CD4-positive, alpha-beta memory T cell (primary cell): ENCODE measurements at regions of chr13 and their contacts with region 1.

Region 1: DNA sequence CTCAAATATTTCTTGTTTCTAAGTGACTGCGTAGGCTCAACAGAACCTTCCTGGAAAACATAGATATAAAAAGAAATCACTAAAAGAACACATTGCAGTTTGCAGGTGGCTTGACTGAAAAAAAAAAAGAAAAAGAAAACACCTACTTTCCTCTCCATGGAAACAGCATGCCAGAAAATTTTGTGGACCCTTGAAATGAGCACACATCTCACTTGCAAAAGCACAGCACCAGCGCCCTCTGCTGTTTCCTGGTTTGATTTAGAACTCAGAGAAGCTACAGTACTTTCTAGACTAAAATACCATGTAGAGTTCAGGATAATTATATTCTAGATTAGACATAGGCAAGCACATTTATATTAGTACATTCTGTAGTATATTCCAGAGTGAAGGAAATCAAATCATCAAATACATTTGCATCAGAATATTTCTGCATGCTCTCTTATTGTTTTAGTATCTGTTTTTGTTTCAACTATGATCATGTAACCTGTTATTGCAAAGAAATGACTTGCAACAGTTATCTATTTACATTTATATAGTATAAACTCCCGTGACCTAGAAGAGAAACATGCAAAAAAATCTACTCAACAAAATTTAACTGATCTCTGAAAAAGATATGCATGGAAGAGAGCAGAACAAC is 22.3 kb upstream of the XPO4 start:
- DNase-seq: peak; percentile 55 to 71 (median 63)
- H3K4me3 ChIP-seq: no peak overlapping the region
- H3K4me3 Mint-ChIP-seq: no peak overlapping the region
- H3K27ac ChIP-seq: no peak overlapping the region
- H3K27ac Mint-ChIP-seq: no peak overlapping the region
- H3K4me1 ChIP-seq: no peaks in the 10 kb centered on the region
- H3K4me1 Mint-ChIP-seq: no peaks in the 10 kb centered on the region
- H3K27me3 ChIP-seq: no peaks in the 10 kb centered on the region
- H3K27me3 Mint-ChIP-seq: no peaks in the 10 kb centered on the region

Region 2: DNA sequence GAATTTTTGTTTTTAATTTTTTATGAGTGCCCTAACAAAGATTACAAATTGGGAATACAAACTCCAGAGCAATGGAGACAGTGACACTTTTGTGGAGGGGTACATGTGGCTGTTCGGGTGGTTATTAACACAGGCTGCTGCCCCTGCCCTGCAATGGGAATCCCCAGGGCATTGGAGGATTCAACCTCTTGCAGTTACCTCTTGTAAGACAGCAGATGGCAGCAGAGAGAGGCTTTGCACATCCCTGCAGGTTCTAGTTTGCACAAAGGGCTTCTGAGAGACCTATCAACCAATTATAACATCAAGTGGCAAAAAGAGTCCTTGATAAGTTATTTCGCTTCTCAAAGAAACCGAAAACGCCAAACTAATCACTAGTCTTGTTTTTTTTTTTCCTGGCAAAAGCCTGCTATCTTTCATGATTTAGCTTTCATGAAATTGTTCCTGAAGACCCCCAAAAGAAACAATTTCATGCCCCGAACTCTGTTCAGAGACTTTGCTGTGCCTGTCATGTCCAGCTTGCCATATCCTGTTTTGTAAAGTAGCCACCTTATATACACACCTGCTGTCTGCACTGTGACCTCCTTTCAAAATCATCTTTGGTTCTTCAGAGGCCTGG is 742.5 kb before region 1 on chr13:
- CTCF ChIA-PET with region 1: interaction called, 3 read pairs
- POLR2A ChIA-PET with region 1: no interaction called
- intact Hi-C with region 1: loop called (anchors 1 kb)
- DNase-seq: peak in 4 of 5 donors; percentile 63 to 73 (median 68)
- H3K4me3 ChIP-seq: no peak overlapping the region
- H3K4me3 Mint-ChIP-seq: no peak overlapping the region
- H3K27ac ChIP-seq: no peak overlapping the region
- H3K27ac Mint-ChIP-seq: no peak overlapping the region
- H3K4me1 ChIP-seq: no peaks in the 10 kb centered on the region
- H3K4me1 Mint-ChIP-seq: peaks cover 0 to 2% (median 0%) of the 10 kb centered on the region in 4 donors
- H3K27me3 ChIP-seq: peaks cover 7% of the 10 kb centered on the region
- H3K27me3 Mint-ChIP-seq: peaks cover 25 to 34% of the 10 kb centered on the region in 2 donors

Region 3: GRCh38 chr13:20197361-20197834 is 727.5 kb before region 1 on chr13:
- CTCF ChIA-PET with region 1: interaction called, 6 read pairs
- POLR2A ChIA-PET with region 1: no interaction called
- intact Hi-C with region 1: loop called (anchors 1 kb)
- DNase-seq: peak in 4 of 5 donors; percentile 42 to 52 (median 49)
- H3K4me3 ChIP-seq: no peak overlapping the region
- H3K4me3 Mint-ChIP-seq: no peak overlapping the region
- H3K27ac ChIP-seq: no peak overlapping the region
- H3K27ac Mint-ChIP-seq: peak overlapping the region in 1 of 7 donors; percentile 2
- H3K4me1 ChIP-seq: peaks cover 22% of the 10 kb centered on the region
- H3K4me1 Mint-ChIP-seq: peaks cover 14 to 21% (median 16%) of the 10 kb centered on the region in 4 donors
- H3K27me3 ChIP-seq: peaks cover 41% of the 10 kb centered on the region
- H3K27me3 Mint-ChIP-seq: peaks cover 34 to 36% of the 10 kb centered on the region in 2 donors

Region 4: GRCh38 chr13:20495082-20496023 is 429.5 kb before region 1 on chr13:
- CTCF ChIA-PET with region 1: interaction called, 104 read pairs
- POLR2A ChIA-PET with region 1: no interaction called
- intact Hi-C with region 1: loop called (anchors 1 kb)
- DNase-seq: peak; percentile 62 to 70 (median 68)
- H3K4me3 ChIP-seq: no peak overlapping the region
- H3K4me3 Mint-ChIP-seq: no peak overlapping the region
- H3K27ac ChIP-seq: no peak overlapping the region
- H3K27ac Mint-ChIP-seq: peak overlapping the region in 1 of 7 donors; percentile 32
- H3K4me1 ChIP-seq: peaks cover 6% of the 10 kb centered on the region
- H3K4me1 Mint-ChIP-seq: peaks cover 0 to 7% (median 2%) of the 10 kb centered on the region in 4 donors
- H3K27me3 ChIP-seq: no peaks in the 10 kb centered on the region
- H3K27me3 Mint-ChIP-seq: no peaks in the 10 kb centered on the region

Region 5: DNA sequence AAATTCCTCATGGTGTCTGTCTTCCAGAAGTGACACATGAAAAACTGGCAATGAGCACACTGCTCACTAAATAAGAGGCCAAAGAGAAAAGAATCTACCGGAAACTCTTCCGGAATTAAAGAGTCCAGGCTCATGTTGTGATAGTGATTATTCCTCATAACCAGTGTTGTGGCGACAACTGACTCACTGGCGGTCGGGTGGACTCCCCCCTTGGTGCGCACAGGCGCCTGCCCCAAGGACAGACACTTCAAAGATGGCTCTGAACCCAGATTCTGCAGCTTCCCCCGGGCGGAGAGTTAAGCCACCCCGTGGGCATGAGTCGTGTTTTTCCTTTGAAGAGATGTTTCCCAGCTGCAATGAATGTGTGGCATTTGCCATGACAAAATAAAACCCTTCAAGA is 211.1 kb before region 1 on chr13:
- CTCF ChIA-PET with region 1: interaction called, 90 read pairs
- POLR2A ChIA-PET with region 1: no interaction called
- intact Hi-C with region 1: no loop called
- DNase-seq: no peak
- H3K4me3 ChIP-seq: no peak overlapping the region
- H3K4me3 Mint-ChIP-seq: no peak overlapping the region
- H3K27ac ChIP-seq: no peak overlapping the region
- H3K27ac Mint-ChIP-seq: no peak overlapping the region
- H3K4me1 ChIP-seq: peaks cover 6% of the 10 kb centered on the region
- H3K4me1 Mint-ChIP-seq: peaks cover 4 to 10% (median 7%) of the 10 kb centered on the region in 4 donors
- H3K27me3 ChIP-seq: no peaks in the 10 kb centered on the region
- H3K27me3 Mint-ChIP-seq: peaks cover 3 to 12% of the 10 kb centered on the region in 2 donors

Region 6: GRCh38 chr13:20738616-20739015 is 186.3 kb before region 1 on chr13:
- CTCF ChIA-PET with region 1: no interaction called
- POLR2A ChIA-PET with region 1: no interaction called
- intact Hi-C with region 1: no loop called
- DNase-seq: no peak
- H3K4me3 ChIP-seq: no peak overlapping the region
- H3K4me3 Mint-ChIP-seq: no peak overlapping the region
- H3K27ac ChIP-seq: no peak overlapping the region
- H3K27ac Mint-ChIP-seq: peak overlapping the region in 1 of 7 donors; percentile 7
- H3K4me1 ChIP-seq: no peaks in the 10 kb centered on the region
- H3K4me1 Mint-ChIP-seq: no peaks in the 10 kb centered on the region
- H3K27me3 ChIP-seq: no peaks in the 10 kb centered on the region
- H3K27me3 Mint-ChIP-seq: no peaks in the 10 kb centered on the region

Region 7: DNA sequence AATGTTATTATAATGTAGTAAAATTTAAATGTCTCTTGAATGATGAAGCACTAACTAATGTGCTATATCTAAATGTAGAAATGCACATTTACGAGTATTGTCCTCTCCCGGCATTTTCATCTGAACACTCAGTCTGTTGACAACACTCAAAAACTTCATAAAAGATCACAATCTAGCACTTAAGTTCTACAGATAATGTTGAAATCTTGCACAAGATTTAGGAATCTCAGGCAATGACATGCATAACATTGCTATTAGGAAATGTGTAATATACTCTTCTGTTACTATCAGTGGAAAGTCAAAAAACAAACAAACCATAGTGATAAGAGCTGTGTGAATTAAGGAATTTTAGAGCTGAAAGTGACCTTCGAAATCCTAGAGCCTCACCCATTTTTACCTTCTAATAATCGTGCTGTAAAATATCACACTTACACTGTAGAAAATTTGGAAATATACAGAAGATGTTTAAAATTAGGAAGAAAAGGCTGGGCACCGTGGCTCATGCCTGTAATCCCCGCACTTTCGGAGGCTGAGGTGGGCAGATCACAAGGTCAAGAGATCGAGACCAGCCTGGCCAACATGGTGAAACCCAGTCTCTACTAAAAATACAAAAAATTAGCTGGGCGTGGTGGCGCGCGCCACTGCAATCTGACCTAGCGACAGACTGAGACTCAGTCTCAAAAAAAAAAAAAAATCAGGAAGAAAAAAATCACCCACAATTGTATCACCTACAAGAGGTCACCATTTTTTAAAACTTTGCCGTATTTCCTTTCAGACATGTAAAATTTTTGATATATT is 15.4 kb after region 1 on chr13:
- CTCF ChIA-PET with region 1: interaction called, 24 read pairs
- POLR2A ChIA-PET with region 1: no interaction called
- intact Hi-C with region 1: no loop called
- DNase-seq: no peak
- H3K4me3 ChIP-seq: no peak overlapping the region
- H3K4me3 Mint-ChIP-seq: no peak overlapping the region
- H3K27ac ChIP-seq: no peak overlapping the region
- H3K27ac Mint-ChIP-seq: no peak overlapping the region
- H3K4me1 ChIP-seq: peaks cover 3% of the 10 kb centered on the region
- H3K4me1 Mint-ChIP-seq: peaks cover 0 to 8% (median under 1%) of the 10 kb centered on the region in 4 donors
- H3K27me3 ChIP-seq: no peaks in the 10 kb centered on the region
- H3K27me3 Mint-ChIP-seq: peaks cover 25 to 30% of the 10 kb centered on the region in 2 donors